Mucosa of descending colon (tissue), 3 donors: ENCODE measurements at regions of chr3 and their contacts with region 1.

Region 1: GRCh38 chr3:189270248-189270832 is 98.6 kb downstream of the TPRG1 start:
- DNase-seq: peak; percentile 61 to 78 (median 73)
- ATAC-seq: peak; percentile 88
- H3K4me3 ChIP-seq: no peak overlapping the region
- H3K4me1 ChIP-seq: no peaks in the 10 kb centered on the region
- CTCF ChIP-seq: peak; percentile 63

Region 2: GRCh38 chr3:189941679-189942078 is 671.3 kb after region 1 on chr3:
- intact Hi-C with region 1: loop called in 1 of 2 experiments (anchors 5 kb)
- DNase-seq: no peak
- ATAC-seq: peak; percentile 45
- H3K4me3 ChIP-seq: no peak overlapping the region
- H3K4me1 ChIP-seq: peaks cover 12% of the 10 kb centered on the region
- CTCF ChIP-seq: no peak